Activated T-helper 2 cell treated with anti-CD3 and anti-CD28 coated beads, Interferon-gamma antibody, Interleukin-2, Interleukin-4, amounts not matched to agents 10 μg/mL and 5 μg/mL and 100 μg/mL, durations not matched to agents 14 hours and 24 hours and 36 hours (primary cell): ENCODE measurements at regions of chr4 and their contacts with region 1.

Region 1: DNA sequence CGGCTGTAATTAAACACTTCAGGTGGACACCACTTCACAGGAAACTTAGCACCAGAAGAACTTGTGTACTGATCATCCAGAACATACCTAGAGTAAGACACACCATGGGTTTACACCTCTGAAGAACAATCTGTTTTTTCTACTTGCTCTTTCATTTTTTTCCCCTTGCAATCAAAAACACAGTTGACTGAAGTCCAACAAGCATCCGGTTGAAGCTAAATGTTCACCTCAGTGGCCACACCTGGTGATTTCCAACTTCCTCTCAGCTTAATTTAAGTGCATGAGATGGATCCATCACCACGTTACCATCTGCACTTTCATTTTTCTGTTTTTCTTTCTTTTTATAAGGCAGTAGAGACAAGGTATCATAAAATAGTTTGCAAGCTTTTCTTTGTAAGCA is 4.9 kb upstream of the TXK start:
- DNase-seq: peak; percentile 24
- H3K4me3 Mint-ChIP-seq: peak overlapping the region; percentile 18
- H3K27ac Mint-ChIP-seq: peak overlapping the region; percentile 83
- H3K4me1 Mint-ChIP-seq: peaks cover 56% of the 10 kb centered on the region
- H3K27me3 Mint-ChIP-seq: no peaks in the 10 kb centered on the region

Region 2: DNA sequence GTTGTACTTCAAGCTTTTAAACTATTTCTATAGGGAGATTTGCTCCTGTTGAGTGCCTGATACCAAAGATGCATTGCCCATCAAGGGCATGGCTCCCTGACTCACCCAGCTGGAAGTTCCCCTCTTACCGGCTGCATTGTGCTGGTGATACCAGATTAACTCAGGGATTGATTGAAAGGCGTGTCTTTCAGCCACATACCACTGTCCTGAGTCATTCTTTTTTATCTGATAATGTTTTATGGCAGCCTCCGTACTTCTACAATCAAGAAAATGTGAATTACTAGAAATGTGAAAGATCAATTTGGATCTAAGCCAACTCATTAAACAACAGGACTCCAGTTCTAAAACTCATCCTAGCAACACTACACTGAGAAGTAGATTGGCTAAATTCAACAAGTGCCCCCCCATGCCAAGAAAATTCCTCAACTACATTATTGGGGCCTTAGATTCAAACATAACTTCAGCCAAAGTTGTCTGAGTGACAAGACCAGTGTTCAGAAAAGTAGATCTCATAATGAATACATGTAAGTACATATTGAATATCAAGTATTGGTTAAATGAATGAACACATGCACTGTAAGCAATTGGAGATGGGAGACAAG is 44.9 kb before region 1 on chr4:
- intact Hi-C with region 1: loop called (anchors 2 kb)
- DNase-seq: no peak
- H3K4me3 Mint-ChIP-seq: no peak overlapping the region
- H3K27ac Mint-ChIP-seq: peak overlapping the region; percentile 7
- H3K4me1 Mint-ChIP-seq: peaks cover 16% of the 10 kb centered on the region
- H3K27me3 Mint-ChIP-seq: peaks cover 4% of the 10 kb centered on the region

Region 3: GRCh38 chr4:48167538-48168263 is 28.8 kb after region 1 on chr4:
- intact Hi-C with region 1: loop called (anchors 2 kb)
- DNase-seq: no peak
- H3K4me3 Mint-ChIP-seq: no peak overlapping the region
- H3K27ac Mint-ChIP-seq: no peak overlapping the region
- H3K4me1 Mint-ChIP-seq: peaks cover 12% of the 10 kb centered on the region
- H3K27me3 Mint-ChIP-seq: peaks cover 5% of the 10 kb centered on the region

Region 4: GRCh38 chr4:48237996-48238645 is 99.2 kb after region 1 on chr4:
- intact Hi-C with region 1: no loop called
- DNase-seq: no peak
- H3K4me3 Mint-ChIP-seq: no peak overlapping the region
- H3K27ac Mint-ChIP-seq: no peak overlapping the region
- H3K4me1 Mint-ChIP-seq: peaks cover 10% of the 10 kb centered on the region
- H3K27me3 Mint-ChIP-seq: peaks cover 8% of the 10 kb centered on the region